Naive thymus-derived CD4-positive, alpha-beta T cell (primary cell): ENCODE measurements at regions of chr4 and their contacts with region 1.

Region 1: GRCh38 chr4:7802093-7802726 is 137.5 kb downstream of the AFAP1 start:
- DNase-seq: peak; percentile 42 to 79 (median 68)
- ATAC-seq: peak; percentile 94
- H3K4me3 ChIP-seq: no peak overlapping the region
- H3K4me3 Mint-ChIP-seq: no peak overlapping the region
- H3K27ac ChIP-seq: no peak overlapping the region
- H3K27ac Mint-ChIP-seq: peak overlapping the region in 5 of 9 donors; percentile 2 to 74 (median 45)
- H3K4me1 ChIP-seq: no peaks in the 10 kb centered on the region
- H3K4me1 Mint-ChIP-seq: peaks cover 5 to 22% (median 14%) of the 10 kb centered on the region in 7 donors
- H3K27me3 ChIP-seq: no peaks in the 10 kb centered on the region
- H3K27me3 Mint-ChIP-seq: no peaks in the 10 kb centered on the region

Region 2: GRCh38 chr4:7524064-7524682 is 278.0 kb before region 1 on chr4:
- CTCF ChIA-PET with region 1: no interaction called
- POLR2A ChIA-PET with region 1: no interaction called
- intact Hi-C with region 1: loop called in 1 of 2 experiments (anchors 10 kb)
- DNase-seq: no peak
- ATAC-seq: no peak
- H3K4me3 ChIP-seq: no peak overlapping the region
- H3K4me3 Mint-ChIP-seq: peak overlapping the region in 3 of 10 donors; percentile 25 to 62 (median 34)
- H3K27ac ChIP-seq: no peak overlapping the region
- H3K27ac Mint-ChIP-seq: peak overlapping the region in 1 of 9 donors; percentile 77
- H3K4me1 ChIP-seq: peaks cover 0 to 6% of the 10 kb centered on the region in 2 donors
- H3K4me1 Mint-ChIP-seq: peaks cover 0 to 25% (median 0%) of the 10 kb centered on the region in 7 donors
- H3K27me3 ChIP-seq: no peaks in the 10 kb centered on the region
- H3K27me3 Mint-ChIP-seq: peaks cover 24 to 84% (median 45%) of the 10 kb centered on the region in 5 donors

Region 3: DNA sequence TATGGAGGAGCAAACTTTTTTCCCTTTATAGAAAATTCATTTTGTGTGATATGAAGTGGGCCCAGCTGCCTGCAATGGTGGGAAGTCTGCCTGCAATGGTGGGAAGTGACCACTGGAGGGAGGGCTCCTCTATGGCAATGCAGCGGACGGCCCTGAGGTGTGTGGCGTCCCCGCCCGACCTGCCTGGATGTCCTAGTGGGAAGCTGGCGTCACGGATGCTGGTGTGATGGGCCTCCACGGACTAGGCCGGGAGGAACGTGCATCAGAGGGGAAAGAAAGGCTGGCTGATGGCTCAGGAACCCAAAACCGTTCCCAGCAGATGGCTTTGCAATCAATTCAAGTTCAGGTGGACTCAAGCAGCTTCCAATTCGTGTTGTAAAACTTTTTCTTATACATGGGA is 40.5 kb before region 1 on chr4:
- CTCF ChIA-PET with region 1: interaction called, 33 read pairs
- POLR2A ChIA-PET with region 1: interaction called, 5 read pairs
- intact Hi-C with region 1: loop called (anchors 1 kb)
- DNase-seq: peak in 8 of 9 donors; percentile 33 to 65 (median 52)
- ATAC-seq: peak; percentile 74
- H3K4me3 ChIP-seq: no peak overlapping the region
- H3K4me3 Mint-ChIP-seq: peak overlapping the region in 5 of 10 donors; percentile 27 to 49 (median 37)
- H3K27ac ChIP-seq: peak overlapping the region; percentile 10
- H3K27ac Mint-ChIP-seq: peak overlapping the region; percentile 47 to 100 (median 92)
- H3K4me1 ChIP-seq: peaks cover 18 to 30% of the 10 kb centered on the region in 2 donors
- H3K4me1 Mint-ChIP-seq: peaks cover 13 to 49% (median 37%) of the 10 kb centered on the region in 7 donors
- H3K27me3 ChIP-seq: no peaks in the 10 kb centered on the region
- H3K27me3 Mint-ChIP-seq: no peaks in the 10 kb centered on the region

Region 4: DNA sequence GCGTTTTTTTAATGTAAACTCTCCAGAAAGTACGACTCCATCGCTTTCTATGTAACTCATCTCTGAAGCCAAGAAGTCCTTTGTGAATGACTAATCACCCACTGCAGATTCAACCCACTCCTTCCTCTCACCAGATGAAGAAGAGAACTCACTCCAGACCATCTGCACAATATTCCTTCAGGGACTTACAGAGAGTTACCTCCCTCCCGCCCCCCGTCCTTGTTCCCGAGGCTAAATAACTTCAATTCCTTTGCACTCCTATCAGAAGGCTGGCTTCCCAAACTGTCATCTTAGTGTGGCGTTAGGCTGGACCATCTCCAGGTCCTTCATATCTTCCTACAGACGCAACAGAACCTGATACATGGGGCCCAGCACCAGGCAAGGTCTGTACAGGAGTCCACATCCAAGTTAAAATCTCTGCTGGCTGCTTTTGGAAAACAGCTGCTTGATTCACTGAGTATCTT is 55.1 kb after region 1 on chr4:
- CTCF ChIA-PET with region 1: interaction called, 4 read pairs
- POLR2A ChIA-PET with region 1: no interaction called
- intact Hi-C with region 1: loop called in 1 of 2 experiments (anchors 2 kb)
- DNase-seq: no peak
- ATAC-seq: no peak
- H3K4me3 ChIP-seq: no peak overlapping the region
- H3K4me3 Mint-ChIP-seq: peak overlapping the region in 8 of 10 donors; percentile 17 to 73 (median 44)
- H3K27ac ChIP-seq: no peak overlapping the region
- H3K27ac Mint-ChIP-seq: peak overlapping the region in 8 of 9 donors; percentile 21 to 96 (median 90)
- H3K4me1 ChIP-seq: peaks cover 29 to 48% of the 10 kb centered on the region in 2 donors
- H3K4me1 Mint-ChIP-seq: peaks cover 36 to 74% (median 66%) of the 10 kb centered on the region in 7 donors
- H3K27me3 ChIP-seq: no peaks in the 10 kb centered on the region
- H3K27me3 Mint-ChIP-seq: no peaks in the 10 kb centered on the region

Region 5: DNA sequence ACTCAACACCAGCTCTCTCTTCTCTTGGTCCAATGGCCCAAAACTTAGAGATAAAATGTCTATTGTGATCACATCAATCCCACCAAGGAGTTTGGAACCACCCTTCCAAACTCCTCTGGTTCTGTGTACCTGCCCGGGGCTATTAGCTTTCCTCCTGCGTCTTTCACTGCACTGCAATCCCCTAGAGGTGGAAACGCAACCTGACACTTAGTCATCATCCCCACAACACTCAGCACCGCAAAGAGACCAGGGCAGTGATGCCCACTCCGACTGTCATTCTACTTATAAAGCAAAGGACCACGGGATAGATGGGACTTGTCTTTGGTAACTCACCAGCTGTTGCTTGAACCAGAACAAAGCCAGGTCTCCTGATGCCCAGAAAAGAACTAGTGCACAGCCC is 115.5 kb after region 1 on chr4:
- CTCF ChIA-PET with region 1: interaction called, 5 read pairs
- POLR2A ChIA-PET with region 1: no interaction called
- intact Hi-C with region 1: loop called in 1 of 2 experiments (anchors 2 kb)
- DNase-seq: no peak
- ATAC-seq: no peak
- H3K4me3 ChIP-seq: no peak overlapping the region
- H3K4me3 Mint-ChIP-seq: peak overlapping the region in 1 of 10 donors; percentile 2
- H3K27ac ChIP-seq: no peak overlapping the region
- H3K27ac Mint-ChIP-seq: peak overlapping the region in 1 of 9 donors; percentile 58
- H3K4me1 ChIP-seq: no peaks in the 10 kb centered on the region
- H3K4me1 Mint-ChIP-seq: peaks cover 12 to 65% (median 49%) of the 10 kb centered on the region in 7 donors
- H3K27me3 ChIP-seq: no peaks in the 10 kb centered on the region
- H3K27me3 Mint-ChIP-seq: no peaks in the 10 kb centered on the region

Region 6: GRCh38 chr4:7973545-7973981 is 171.4 kb after region 1 on chr4:
- CTCF ChIA-PET with region 1: interaction called, 9 read pairs
- POLR2A ChIA-PET with region 1: no interaction called
- intact Hi-C with region 1: loop called in 1 of 2 experiments (anchors 5 kb)
- DNase-seq: no peak
- ATAC-seq: no peak
- H3K4me3 ChIP-seq: no peak overlapping the region
- H3K4me3 Mint-ChIP-seq: peak overlapping the region in 1 of 10 donors; percentile 5
- H3K27ac ChIP-seq: no peak overlapping the region
- H3K27ac Mint-ChIP-seq: peak overlapping the region in 6 of 9 donors; percentile 43 to 100 (median 77)
- H3K4me1 ChIP-seq: peaks cover 16 to 37% of the 10 kb centered on the region in 2 donors
- H3K4me1 Mint-ChIP-seq: peaks cover 24 to 51% (median 33%) of the 10 kb centered on the region in 7 donors
- H3K27me3 ChIP-seq: no peaks in the 10 kb centered on the region
- H3K27me3 Mint-ChIP-seq: peaks cover 0 to under 1% (median 0%) of the 10 kb centered on the region in 5 donors